Activated CD8-positive, alpha-beta T cell treated with anti-CD3 and anti-CD28 coated beads, Interleukin-2, amount 10 ng/mL, durations not matched to agents 7 days and 5 days (primary cell): ENCODE measurements at regions of chr17 and their contacts with region 1.

Region 1: GRCh38 chr17:2592971-2593820 is at the start of gene PAFAH1B1:
- DNase-seq: peak; percentile 92
- ATAC-seq: peak; percentile 85
- H3K4me3 Mint-ChIP-seq: peak within 1 kb of the TSS; percentile 93
- H3K27ac Mint-ChIP-seq: peak within 1 kb of the TSS; percentile 94
- H3K4me1 Mint-ChIP-seq: peaks cover 30% of the 10 kb centered on the region
- H3K27me3 Mint-ChIP-seq: peaks cover 3% of the 10 kb centered on the region
- total RNA-seq, gene PAFAH1B1: 164 to 173 TPM

Region 2: DNA sequence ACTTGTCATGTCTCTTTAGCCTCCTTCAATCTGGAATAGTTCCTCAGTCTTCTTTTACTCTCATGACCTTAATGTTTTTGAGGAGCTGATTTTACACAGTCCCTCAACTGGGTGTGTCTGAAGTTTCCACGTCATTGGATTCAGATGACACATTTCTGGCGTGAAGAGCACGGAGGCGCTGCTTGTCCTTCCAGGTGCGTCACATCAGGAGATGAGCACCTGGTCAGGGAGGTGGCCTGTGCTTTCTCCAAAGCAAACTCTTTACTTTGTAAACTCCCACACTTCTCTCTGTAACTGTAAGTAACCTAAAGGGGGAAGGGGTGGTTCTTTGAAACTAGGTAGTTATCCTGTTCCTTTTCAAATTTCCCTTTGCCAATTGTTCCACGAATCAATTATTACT is 139.9 kb before region 1 on chr17:
- CTCF ChIA-PET with region 1: no interaction called
- POLR2A ChIA-PET with region 1: no interaction called
- DNase-seq: no peak
- ATAC-seq: no peak
- H3K4me3 Mint-ChIP-seq: no peak overlapping the region
- H3K27ac Mint-ChIP-seq: no peak overlapping the region
- H3K4me1 Mint-ChIP-seq: no peaks in the 10 kb centered on the region
- H3K27me3 Mint-ChIP-seq: no peaks in the 10 kb centered on the region

Region 3: GRCh38 chr17:2511462-2512369 is 81.5 kb before region 1 on chr17 and contains the start of gene METTL16:
- CTCF ChIA-PET with region 1: no interaction called
- POLR2A ChIA-PET with region 1: interaction called, 10 read pairs
- DNase-seq: peak; percentile 100
- ATAC-seq: peak; percentile 99
- H3K4me3 Mint-ChIP-seq: no peak within 1 kb of the TSS
- H3K27ac Mint-ChIP-seq: peak within 1 kb of the TSS; percentile 12
- H3K4me1 Mint-ChIP-seq: peaks cover 12% of the 10 kb centered on the region
- H3K27me3 Mint-ChIP-seq: no peaks in the 10 kb centered on the region
- total RNA-seq, gene METTL16: 25.7 to 27.0 TPM